Activated CD8-positive, alpha-beta T cell treated with anti-CD3 and anti-CD28 coated beads for 36 hours (primary cell): ENCODE measurements at regions of chr4 and their contacts with region 1.

Region 1: GRCh38 chr4:158722917-158723793 is at the start of gene PPID:
- DNase-seq: peak; percentile 90
- ATAC-seq: peak; percentile 92
- H3K4me3 Mint-ChIP-seq: peak within 1 kb of the TSS; percentile 93
- H3K27ac Mint-ChIP-seq: peak within 1 kb of the TSS; percentile 98
- H3K4me1 Mint-ChIP-seq: peaks cover 54% of the 10 kb centered on the region
- H3K27me3 Mint-ChIP-seq: peaks cover 7% of the 10 kb centered on the region
- CTCF ChIP-seq: no peak
- total RNA-seq, gene PPID: 66.5 to 69.3 TPM

Region 2: GRCh38 chr4:158671915-158672806 is 51.0 kb before region 1 on chr4 and contains the start of gene ETFDH:
- CTCF ChIA-PET with region 1: interaction called, 3 read pairs
- POLR2A ChIA-PET with region 1: interaction called, 6 read pairs
- intact Hi-C with region 1: loop called (anchors 5 kb)
- DNase-seq: peak; percentile 98
- ATAC-seq: peak; percentile 86
- H3K4me3 Mint-ChIP-seq: peak within 1 kb of the TSS; percentile 98
- H3K27ac Mint-ChIP-seq: peak within 1 kb of the TSS; percentile 98
- H3K4me1 Mint-ChIP-seq: peaks cover 31% of the 10 kb centered on the region
- H3K27me3 Mint-ChIP-seq: no peaks in the 10 kb centered on the region
- CTCF ChIP-seq: peak; percentile 32
- total RNA-seq, gene ETFDH: 28.8 to 31.6 TPM

Region 3: DNA sequence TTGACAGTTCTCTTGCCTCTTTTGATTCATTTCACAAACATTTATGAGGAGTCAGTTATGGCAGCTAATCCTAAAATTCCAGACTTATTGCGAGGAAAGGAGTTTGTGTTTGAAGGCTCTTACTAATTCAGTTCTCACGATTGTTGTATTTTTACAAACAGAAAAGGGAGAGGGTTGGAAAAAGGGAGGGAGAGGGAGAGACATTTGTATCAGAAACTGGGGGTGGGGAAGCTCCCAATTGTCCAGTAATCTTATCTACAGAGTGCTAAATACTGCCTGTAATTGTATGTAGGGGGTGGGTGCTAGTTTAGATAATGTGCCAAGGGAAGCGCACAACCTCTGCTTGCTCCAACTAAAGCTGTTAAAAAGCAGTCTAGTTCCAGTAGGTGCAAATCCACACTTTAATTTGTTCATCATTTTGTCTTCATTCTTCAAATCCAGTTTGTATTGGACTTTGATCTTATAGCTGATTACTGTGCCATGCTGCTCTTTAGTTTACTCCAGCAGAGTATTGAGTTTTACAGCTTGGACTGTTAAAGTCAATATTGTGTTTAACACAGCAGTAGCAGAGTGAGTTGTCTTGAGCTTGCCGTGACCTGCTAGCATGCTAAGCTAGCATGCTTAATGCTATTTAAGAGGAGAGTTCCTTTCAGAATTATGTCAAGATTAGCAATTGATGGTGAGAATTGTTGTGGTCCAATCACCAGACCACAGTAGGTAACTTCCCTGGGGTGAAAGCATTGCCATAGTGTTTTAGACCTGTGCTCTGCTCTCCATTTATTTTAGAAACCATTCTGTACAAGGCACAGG is 59.6 kb after region 1 on chr4:
- CTCF ChIA-PET with region 1: no interaction called
- POLR2A ChIA-PET with region 1: no interaction called
- intact Hi-C with region 1: no loop called
- DNase-seq: no peak
- ATAC-seq: no peak
- H3K4me3 Mint-ChIP-seq: no peak overlapping the region
- H3K27ac Mint-ChIP-seq: no peak overlapping the region
- H3K4me1 Mint-ChIP-seq: peaks cover 32% of the 10 kb centered on the region
- H3K27me3 Mint-ChIP-seq: no peaks in the 10 kb centered on the region
- CTCF ChIP-seq: no peak

Region 4: DNA sequence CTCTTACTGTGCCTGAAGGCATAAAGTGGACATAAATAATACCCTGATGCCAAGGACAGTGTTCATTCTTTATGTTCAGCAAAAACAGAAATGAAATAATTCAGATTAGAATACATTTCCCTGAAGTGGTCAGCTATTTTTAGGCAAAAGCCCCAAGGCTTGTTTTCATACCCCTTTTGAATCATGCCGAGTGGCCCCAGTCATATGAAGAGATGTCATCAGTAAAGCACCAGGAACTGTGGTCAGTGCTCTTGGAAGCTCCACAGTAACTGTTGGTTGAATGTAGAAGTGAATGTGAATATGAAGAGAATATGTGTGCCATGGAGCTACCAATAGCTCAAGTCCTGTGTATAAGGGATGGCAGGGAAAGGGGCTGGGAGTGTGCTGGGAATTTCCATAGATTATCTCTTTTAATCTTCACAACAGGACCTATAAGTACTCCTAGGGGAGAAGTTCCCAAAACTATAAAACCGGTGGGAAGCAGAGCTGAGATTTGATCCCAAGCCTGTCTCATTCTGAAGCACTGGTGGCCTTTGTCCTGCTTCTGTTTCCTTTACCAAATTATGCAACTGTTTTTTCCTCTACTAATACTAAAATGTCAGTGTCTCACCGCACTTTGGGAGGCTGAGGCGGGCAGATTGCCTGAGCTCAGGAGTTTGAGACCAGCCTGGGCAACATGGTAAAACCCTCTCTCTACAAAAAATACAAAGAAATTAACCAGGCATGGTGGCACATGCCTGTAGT is 98.2 kb after region 1 on chr4:
- CTCF ChIA-PET with region 1: no interaction called
- POLR2A ChIA-PET with region 1: no interaction called
- intact Hi-C with region 1: loop called (anchors 10 kb)
- DNase-seq: peak; percentile 19
- ATAC-seq: peak; percentile 50
- H3K4me3 Mint-ChIP-seq: no peak overlapping the region
- H3K27ac Mint-ChIP-seq: no peak overlapping the region
- H3K4me1 Mint-ChIP-seq: peaks cover 54% of the 10 kb centered on the region
- H3K27me3 Mint-ChIP-seq: no peaks in the 10 kb centered on the region
- CTCF ChIP-seq: no peak

Region 5: DNA sequence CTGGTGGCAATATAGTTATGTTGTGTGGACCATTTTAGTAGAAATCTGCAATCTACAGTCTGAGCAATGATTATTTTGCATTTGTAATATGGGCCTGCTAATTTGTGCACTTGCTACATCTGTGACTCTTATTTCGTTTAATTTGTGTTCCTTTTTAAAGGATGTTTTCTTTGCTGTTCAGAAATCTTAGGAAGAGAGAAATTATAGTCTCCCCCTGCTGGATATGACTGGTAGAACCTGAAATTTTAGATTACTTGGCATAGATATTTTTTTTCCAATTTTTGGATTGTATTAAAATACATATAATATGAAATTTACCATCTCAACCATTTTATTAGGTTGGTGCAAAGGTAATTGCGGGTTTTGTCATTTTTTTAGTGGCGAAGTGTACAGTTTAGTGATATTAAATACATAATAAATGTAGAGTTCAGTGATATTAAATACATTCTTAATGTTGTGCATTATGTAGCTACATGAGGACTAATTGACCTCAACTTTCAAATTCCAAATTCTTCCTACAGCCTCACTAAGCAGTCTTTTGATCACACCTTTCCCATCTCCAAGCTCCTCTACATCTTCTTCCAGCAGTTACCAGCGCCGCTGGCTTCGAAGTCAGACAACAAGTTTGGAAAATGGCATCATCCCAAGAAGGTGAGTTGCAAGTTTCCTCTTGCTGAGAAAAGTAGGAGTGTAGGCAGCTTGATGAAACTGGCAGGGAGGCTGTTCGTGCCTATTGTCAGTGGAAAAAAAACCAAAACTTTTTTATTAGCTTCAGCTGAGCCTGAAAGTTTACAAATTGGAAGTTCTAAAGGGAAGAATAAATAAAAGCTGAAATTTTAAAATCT is 127.9 kb after region 1 on chr4:
- CTCF ChIA-PET with region 1: interaction called, 10 read pairs
- POLR2A ChIA-PET with region 1: no interaction called
- intact Hi-C with region 1: no loop called
- DNase-seq: no peak
- ATAC-seq: no peak
- H3K4me3 Mint-ChIP-seq: no peak overlapping the region
- H3K27ac Mint-ChIP-seq: no peak overlapping the region
- H3K4me1 Mint-ChIP-seq: peaks cover 20% of the 10 kb centered on the region
- H3K27me3 Mint-ChIP-seq: no peaks in the 10 kb centered on the region
- CTCF ChIP-seq: peak; percentile 72

Region 6: DNA sequence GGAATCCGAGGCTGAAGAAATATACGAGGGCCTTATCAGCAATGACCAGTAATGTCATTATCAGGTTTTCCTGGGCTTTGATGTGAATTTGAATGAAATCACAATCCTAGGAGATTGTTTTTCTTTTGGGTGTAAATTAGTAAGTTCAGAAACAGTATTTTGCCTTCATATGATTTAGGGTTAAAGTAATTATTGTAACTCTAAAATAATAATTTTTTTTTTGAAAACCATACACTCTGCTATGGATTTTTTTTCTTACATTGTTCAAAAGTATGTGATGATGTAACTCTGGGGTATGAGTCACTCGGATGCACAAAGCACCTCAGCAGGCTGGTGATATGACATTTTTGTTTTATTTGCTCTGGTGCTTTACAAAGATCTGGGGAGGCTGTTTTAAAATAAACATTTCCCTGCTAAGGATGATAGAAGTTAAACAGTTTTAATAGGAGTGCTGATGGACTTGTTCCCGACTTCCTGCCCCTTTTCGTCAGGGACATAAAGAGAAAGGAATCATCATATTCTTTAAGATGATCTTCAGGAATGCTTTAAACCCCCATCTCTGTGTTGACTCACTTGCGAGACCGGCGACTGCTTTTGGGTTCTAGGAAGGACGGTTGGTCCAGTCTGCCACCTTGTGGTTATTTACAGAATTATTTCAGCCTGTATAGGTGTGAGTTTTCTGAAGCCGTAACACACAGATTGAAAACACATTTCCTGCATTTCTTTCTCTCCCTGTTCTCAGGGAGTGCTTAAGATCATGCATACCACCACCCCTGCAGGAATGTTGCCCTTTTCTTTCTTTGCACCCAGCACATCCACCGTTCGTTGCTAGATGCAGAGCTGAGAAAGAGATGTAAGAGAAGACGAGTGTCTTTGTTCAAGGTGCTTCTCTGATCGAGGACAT is 452.2 kb after region 1 on chr4:
- CTCF ChIA-PET with region 1: no interaction called
- POLR2A ChIA-PET with region 1: no interaction called
- intact Hi-C with region 1: loop called (anchors 10 kb)
- DNase-seq: peak; percentile 74
- ATAC-seq: peak; percentile 94
- H3K4me3 Mint-ChIP-seq: peak overlapping the region; percentile 49
- H3K27ac Mint-ChIP-seq: no peak overlapping the region
- H3K4me1 Mint-ChIP-seq: peaks cover 63% of the 10 kb centered on the region
- H3K27me3 Mint-ChIP-seq: no peaks in the 10 kb centered on the region
- CTCF ChIP-seq: peak; percentile 82

Region 7: DNA sequence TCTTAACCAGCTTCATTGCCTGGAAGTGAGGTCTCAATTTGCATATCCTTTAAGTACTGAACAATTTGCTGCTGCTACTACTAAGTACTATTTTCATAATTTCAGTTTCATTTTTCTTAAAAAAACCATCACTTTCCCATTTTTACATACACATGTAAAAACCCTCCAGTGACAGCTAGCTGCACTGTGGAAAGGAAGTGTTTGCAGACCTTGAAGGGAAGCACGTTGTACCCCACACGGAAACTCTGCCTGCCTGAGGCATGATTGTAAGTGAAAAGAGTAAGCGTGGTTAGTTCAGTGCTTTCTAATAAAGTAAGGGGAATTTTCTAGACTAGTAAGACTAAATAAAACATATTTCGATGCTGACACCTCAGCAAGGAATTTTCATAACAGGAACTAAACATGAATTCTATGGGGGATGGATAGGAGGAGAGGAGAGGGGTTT is 483.3 kb after region 1 on chr4:
- CTCF ChIA-PET with region 1: interaction called, 4 read pairs
- POLR2A ChIA-PET with region 1: no interaction called
- intact Hi-C with region 1: loop called (anchors 10 kb)
- DNase-seq: peak; percentile 71
- ATAC-seq: peak; percentile 86
- H3K4me3 Mint-ChIP-seq: peak overlapping the region; percentile 53
- H3K27ac Mint-ChIP-seq: peak overlapping the region; percentile 72
- H3K4me1 Mint-ChIP-seq: peaks cover 51% of the 10 kb centered on the region
- H3K27me3 Mint-ChIP-seq: no peaks in the 10 kb centered on the region
- CTCF ChIP-seq: no peak